ENCODE measurements at regions of chr1 and their contacts with region 1.

Region 1: GRCh38 chr1:47189844-47190508 is at the start of gene PDZK1IP1:
- DNase-seq: no peak
- H3K4me3 ChIP-seq: peak within 1 kb of the TSS in 1 of 2 donors; percentile 23
- H3K27ac ChIP-seq: peak within 1 kb of the TSS; percentile 70
- H3K4me1 ChIP-seq: peaks cover 36% of the 10 kb centered on the region
- H3K27me3 ChIP-seq: no peaks in the 10 kb centered on the region
- CTCF ChIP-seq: no peak
- POLR2A ChIP-seq: no peak
- total RNA-seq, gene PDZK1IP1: 55.2 TPM

Region 2: DNA sequence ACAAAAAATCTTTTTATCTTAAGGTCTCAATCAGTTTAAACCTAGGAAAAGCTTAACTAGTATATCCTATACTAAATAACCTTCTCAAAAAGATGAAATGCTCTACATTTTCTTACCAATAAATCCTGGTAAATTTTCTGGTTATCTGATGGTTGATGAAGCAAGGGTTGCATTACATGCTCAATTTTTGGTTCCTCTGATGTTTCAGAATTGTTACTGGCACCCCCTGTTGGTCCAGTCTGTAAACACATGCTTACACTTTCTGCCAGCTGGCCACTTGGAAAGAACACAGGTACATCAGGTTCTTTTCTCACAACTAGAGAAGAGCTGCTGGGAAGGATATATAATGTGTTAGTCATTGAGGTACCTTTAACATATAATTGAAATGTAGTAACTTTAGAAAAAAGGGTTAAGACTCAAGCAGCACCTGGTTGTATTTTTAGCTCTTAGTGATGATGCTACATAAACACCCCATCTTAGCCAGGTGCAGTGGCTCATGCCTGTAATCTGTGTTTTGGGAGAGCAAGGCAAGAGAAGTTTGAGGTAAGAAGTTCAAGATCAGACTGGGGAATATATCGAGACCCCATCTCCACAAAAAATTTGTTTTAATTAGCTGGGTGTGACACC is 72.9 kb after region 1 on chr1:
- intact Hi-C with region 1: no loop called
- DNase-seq: no peak
- H3K4me3 ChIP-seq: no peak overlapping the region
- H3K27ac ChIP-seq: no peak overlapping the region
- H3K4me1 ChIP-seq: no peaks in the 10 kb centered on the region
- H3K27me3 ChIP-seq: no peaks in the 10 kb centered on the region
- CTCF ChIP-seq: peak in 2 of 3 experiments; percentile 26 to 41
- POLR2A ChIP-seq: no peak

Region 3: DNA sequence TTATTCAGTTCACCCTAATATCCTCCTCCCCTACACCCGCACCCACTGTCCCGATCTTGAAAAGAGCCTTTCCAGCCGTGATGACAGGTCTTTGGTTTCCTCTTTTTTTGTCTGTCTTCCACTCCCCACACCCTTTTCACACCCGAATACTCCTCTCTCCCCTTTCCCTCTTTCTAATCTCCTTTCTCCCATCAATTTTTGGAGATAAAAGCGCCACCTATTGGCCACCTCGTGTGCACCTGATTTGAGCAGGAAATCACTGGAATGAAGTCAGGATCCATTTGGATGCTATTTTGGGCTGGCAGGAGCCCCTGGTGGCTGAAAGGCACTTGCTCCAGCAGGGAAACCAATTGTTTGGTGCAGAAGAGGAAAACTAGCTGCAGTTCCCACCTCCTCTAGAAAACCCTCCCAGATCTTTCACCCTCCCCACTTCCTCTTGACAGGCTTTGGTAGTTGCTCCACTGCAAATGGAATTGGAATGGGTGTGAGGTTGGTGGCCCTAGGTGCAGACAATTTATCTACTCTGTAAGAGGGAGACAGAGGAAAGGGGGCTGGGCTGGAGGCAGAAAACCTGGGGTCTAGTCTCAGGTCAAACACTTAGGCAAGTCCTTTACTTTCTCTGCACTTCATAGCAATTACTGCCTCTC is 234.5 kb after region 1 on chr1:
- intact Hi-C with region 1: loop called (anchors 10 kb)
- DNase-seq: no peak
- H3K4me3 ChIP-seq: no peak overlapping the region
- H3K27ac ChIP-seq: no peak overlapping the region
- H3K4me1 ChIP-seq: no peaks in the 10 kb centered on the region
- H3K27me3 ChIP-seq: no peaks in the 10 kb centered on the region
- CTCF ChIP-seq: peak; percentile 25 to 41 (median 37)
- POLR2A ChIP-seq: no peak

Region 4: DNA sequence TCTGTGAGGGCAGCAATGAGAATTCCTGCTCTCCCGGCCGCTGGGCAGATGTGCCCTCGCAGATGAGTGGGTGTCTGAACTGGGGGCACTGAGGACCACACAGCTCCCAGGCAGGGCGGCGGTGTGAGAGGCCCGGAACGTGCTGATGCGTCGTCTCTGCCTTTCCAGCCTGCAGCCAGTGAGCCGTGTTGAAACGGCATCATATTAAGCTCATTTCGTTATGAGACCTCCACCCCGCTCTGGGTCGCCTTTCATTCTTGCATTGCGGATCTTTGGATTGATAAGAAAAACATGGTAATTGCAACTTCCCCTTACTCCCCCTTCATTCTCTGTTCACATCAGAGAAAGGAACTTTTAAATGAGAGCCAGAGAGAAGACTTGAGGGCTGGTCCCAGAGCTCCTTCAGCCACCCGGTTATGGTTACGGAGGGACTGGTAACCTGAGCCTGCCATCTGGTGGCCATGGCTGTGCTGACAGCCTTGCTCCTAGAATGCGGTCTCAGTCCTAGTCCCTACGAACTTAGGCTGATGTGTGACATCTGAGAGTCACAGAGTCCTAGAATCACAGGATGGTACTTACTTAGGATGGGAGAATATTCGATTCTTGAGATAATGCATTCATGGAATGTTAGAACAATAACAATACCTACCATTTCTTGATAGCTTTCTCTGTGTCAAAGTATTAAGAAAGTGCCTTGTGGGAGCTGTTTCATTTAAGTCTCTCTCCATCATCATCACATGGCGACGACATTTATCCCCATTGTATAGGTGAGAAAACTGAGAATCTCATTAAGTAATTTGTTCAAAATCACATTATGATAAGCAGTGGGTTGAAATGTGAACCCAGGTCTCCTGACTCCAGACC is 536.2 kb after region 1 on chr1:
- intact Hi-C with region 1: loop called (anchors 10 kb)
- DNase-seq: no peak
- H3K4me3 ChIP-seq: peak overlapping the region in 1 of 2 donors; percentile 29
- H3K27ac ChIP-seq: no peak overlapping the region
- H3K4me1 ChIP-seq: peaks cover 18% of the 10 kb centered on the region
- H3K27me3 ChIP-seq: peaks cover 6% of the 10 kb centered on the region
- CTCF ChIP-seq: peak; percentile 77 to 80 (median 79)
- POLR2A ChIP-seq: no peak